Testis (tissue), 5 donors: ENCODE measurements at regions of chr9 and their contacts with region 1.

Region 1: GRCh38 chr9:113446323-113446740 is 17.2 kb upstream of the RGS3 start:
- DNase-seq: peak; percentile 41
- H3K4me3 ChIP-seq: no peak overlapping the region
- H3K27ac ChIP-seq: no peak overlapping the region
- H3K4me1 ChIP-seq: peaks cover 3% of the 10 kb centered on the region
- H3K27me3 ChIP-seq: no peaks in the 10 kb centered on the region
- CTCF ChIP-seq: peak; percentile 51 to 69 (median 66)
- POLR2A ChIP-seq: no peak

Region 2: GRCh38 chr9:113657703-113658544 is 211.6 kb after region 1 on chr9:
- intact Hi-C with region 1: loop called (anchors 10 kb)
- DNase-seq: peak; percentile 90
- H3K4me3 ChIP-seq: no peak overlapping the region
- H3K27ac ChIP-seq: no peak overlapping the region
- H3K4me1 ChIP-seq: peaks cover 10% of the 10 kb centered on the region
- H3K27me3 ChIP-seq: no peaks in the 10 kb centered on the region
- CTCF ChIP-seq: peak; percentile 87 to 92 (median 90)
- POLR2A ChIP-seq: no peak